GM12878 (cell line): ENCODE measurements at regions of chr14 and their contacts with region 1.

Region 1: DNA sequence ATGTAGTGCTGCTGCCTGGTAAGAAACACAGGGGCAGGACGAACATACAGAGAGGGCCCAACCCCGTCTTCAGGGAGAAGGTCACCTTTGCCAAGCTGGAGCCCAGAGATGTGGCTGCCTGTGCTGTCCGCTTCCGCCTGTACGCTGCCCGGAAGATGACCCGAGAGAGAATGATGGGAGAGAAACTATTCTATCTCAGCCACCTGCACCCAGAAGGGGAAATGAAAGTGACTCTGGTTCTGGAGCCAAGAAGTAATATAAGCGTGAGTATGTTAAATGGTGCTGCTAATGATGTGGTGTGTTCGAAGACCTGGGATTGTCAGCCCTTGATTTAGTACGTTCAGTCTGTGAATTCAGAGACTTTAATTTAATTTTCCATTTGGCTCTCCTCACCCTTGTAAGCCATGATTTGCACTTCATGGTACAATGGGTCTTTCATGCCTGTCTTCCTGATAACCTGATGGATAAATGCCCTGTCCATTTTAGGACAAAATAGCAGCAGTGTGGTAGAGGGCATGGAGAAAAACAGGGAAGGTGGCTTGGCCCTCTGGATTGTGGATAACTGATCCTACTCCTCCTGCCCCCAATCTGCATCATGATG is 318.9 kb downstream of the SNAPC1 start:
- DNase-seq: peak; percentile 75
- ATAC-seq: peak; percentile 95
- H3K4me3 ChIP-seq: peak overlapping the region; percentile 37
- H3K27ac ChIP-seq: peak overlapping the region; percentile 88
- H3K4me1 ChIP-seq: peaks cover 51% of the 10 kb centered on the region
- H3K27me3 ChIP-seq: no peaks in the 10 kb centered on the region
- CTCF ChIP-seq: no peak
- EP300 ChIP-seq: peak; percentile 80 to 94; a peak in 3 of 4 replicates
- POLR2A ChIP-seq: peak; percentile 61
- RAD21 ChIP-seq: no peak

Region 2: DNA sequence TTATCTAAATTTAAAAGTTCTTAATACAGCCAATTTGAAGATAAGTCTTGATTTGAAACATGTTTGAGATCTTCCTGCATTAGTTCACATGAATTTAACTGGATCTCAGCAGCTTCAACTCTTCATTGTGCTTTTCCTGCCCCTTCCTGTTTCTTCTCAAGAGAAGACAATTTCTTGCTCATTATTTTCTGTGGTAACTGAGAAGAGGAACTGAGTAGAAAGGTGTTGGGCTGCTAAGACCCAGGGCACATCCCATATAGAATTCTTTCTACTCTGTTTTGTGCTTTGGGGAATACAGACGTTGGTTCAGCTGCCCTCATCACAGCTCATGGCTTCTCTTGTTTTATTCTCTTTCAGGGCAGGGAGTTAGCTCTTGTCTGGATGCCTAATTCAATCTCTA is 208.7 kb before region 1 on chr14:
- CTCF ChIA-PET with region 1: no interaction called
- POLR2A ChIA-PET with region 1: no interaction called
- RAD21 ChIA-PET with region 1: interaction called, 5 read pairs
- SMC1A ChIA-PET with region 1: interaction called, 8 read pairs
- in situ Hi-C with region 1: no loop called
- intact Hi-C with region 1: loop called (anchors 5 kb)
- DNase-seq: peak; percentile 73
- ATAC-seq: peak; percentile 96
- H3K4me3 ChIP-seq: no peak overlapping the region
- H3K27ac ChIP-seq: no peak overlapping the region
- H3K4me1 ChIP-seq: peaks cover 18% of the 10 kb centered on the region; the same call in 1 of the 2 replicates
- H3K27me3 ChIP-seq: no peaks in the 10 kb centered on the region
- CTCF ChIP-seq: no peak
- EP300 ChIP-seq: peak in 1 of 2 experiments; percentile 92; a peak in 2 of 4 replicates
- POLR2A ChIP-seq: no peak
- RAD21 ChIP-seq: no peak

Region 3: DNA sequence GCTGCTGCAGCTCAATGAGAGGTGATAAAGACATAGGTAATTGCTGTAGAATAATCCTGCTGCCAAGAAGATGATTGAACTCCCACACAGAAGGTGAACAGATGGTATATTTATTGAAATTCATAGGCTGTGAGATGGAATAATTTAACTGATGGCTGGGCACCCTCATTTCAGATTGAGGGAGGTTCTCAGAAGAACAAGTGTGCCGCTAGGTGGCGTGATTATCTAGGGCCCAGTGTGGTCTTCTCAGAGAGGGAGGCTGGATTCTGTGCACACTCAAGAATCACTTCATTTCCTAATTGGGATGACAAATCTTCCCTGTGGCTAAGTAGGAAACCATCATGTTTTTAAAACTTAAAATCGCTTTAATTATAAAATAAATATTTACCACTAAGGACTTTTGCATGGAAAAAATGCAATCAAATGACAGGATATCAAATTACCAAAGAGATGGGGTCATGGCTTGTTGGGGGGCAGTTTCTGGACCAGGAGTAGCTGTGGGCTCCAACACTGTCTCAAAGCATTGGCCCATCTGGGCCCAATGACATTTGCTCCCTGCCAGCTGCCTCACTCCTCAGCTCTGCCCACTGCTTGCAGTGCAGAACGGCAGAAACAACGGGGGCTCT is 186.5 kb before region 1 on chr14:
- CTCF ChIA-PET with region 1: interaction called, 6 read pairs
- POLR2A ChIA-PET with region 1: no interaction called
- RAD21 ChIA-PET with region 1: interaction called, 6 read pairs
- SMC1A ChIA-PET with region 1: interaction called, 14 read pairs
- in situ Hi-C with region 1: no loop called
- intact Hi-C with region 1: no loop called
- DNase-seq: no peak
- ATAC-seq: peak; percentile 69
- H3K4me3 ChIP-seq: no peak overlapping the region
- H3K27ac ChIP-seq: no peak overlapping the region
- H3K4me1 ChIP-seq: peaks cover 11% of the 10 kb centered on the region
- H3K27me3 ChIP-seq: no peaks in the 10 kb centered on the region
- CTCF ChIP-seq: peak; percentile 69 to 77 (median 69)
- EP300 ChIP-seq: no peak
- POLR2A ChIP-seq: no peak
- RAD21 ChIP-seq: peak; percentile 80

Region 4: DNA sequence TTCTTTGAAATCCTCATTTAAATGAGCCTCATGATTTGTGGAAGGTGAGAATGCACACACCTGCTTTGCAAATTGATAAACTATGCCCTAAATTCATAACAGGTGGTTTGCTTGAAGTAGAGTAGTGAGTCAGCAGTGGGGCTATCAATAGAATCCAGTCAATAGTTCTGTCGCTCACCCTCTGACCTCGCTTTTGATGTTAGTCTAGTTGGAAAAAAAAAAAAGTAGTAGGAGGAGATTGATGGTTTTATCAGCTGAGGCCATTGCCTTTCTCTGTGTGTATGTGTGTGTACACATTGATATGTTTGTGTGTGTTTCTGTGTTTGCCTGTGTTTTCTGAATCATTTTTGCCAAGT is 51.6 kb before region 1 on chr14:
- CTCF ChIA-PET with region 1: interaction called, 6 read pairs
- POLR2A ChIA-PET with region 1: interaction called, 3 read pairs
- RAD21 ChIA-PET with region 1: interaction called, 23 read pairs
- SMC1A ChIA-PET with region 1: interaction called, 26 read pairs
- in situ Hi-C with region 1: no loop called
- intact Hi-C with region 1: no loop called
- DNase-seq: peak; percentile 16
- ATAC-seq: peak; percentile 72
- H3K4me3 ChIP-seq: no peak overlapping the region
- H3K27ac ChIP-seq: no peak overlapping the region
- H3K4me1 ChIP-seq: peaks cover 21% of the 10 kb centered on the region
- H3K27me3 ChIP-seq: no peaks in the 10 kb centered on the region
- CTCF ChIP-seq: no peak
- EP300 ChIP-seq: no peak
- POLR2A ChIP-seq: no peak
- RAD21 ChIP-seq: no peak

Region 5: GRCh38 chr14:62097072-62097471 is 16.0 kb after region 1 on chr14:
- CTCF ChIA-PET with region 1: interaction called, 6 read pairs
- POLR2A ChIA-PET with region 1: interaction called, 5 read pairs
- RAD21 ChIA-PET with region 1: interaction called, 33 read pairs
- SMC1A ChIA-PET with region 1: interaction called, 87 read pairs
- in situ Hi-C with region 1: no loop called
- intact Hi-C with region 1: no loop called
- DNase-seq: no peak
- ATAC-seq: peak; percentile 64
- H3K4me3 ChIP-seq: no peak overlapping the region
- H3K27ac ChIP-seq: no peak overlapping the region
- H3K4me1 ChIP-seq: no peaks in the 10 kb centered on the region
- H3K27me3 ChIP-seq: no peaks in the 10 kb centered on the region
- CTCF ChIP-seq: no peak
- EP300 ChIP-seq: no peak
- POLR2A ChIP-seq: no peak
- RAD21 ChIP-seq: no peak

Region 6: GRCh38 chr14:62117010-62117750 is 36.1 kb after region 1 on chr14:
- CTCF ChIA-PET with region 1: interaction called, 3 read pairs
- POLR2A ChIA-PET with region 1: no interaction called
- RAD21 ChIA-PET with region 1: interaction called, 5 read pairs
- SMC1A ChIA-PET with region 1: interaction called, 15 read pairs
- in situ Hi-C with region 1: no loop called
- intact Hi-C with region 1: no loop called
- DNase-seq: no peak
- ATAC-seq: peak; percentile 95
- H3K4me3 ChIP-seq: peak overlapping the region; percentile 41; the same call in 1 of the 2 replicates
- H3K27ac ChIP-seq: no peak overlapping the region
- H3K4me1 ChIP-seq: no peaks in the 10 kb centered on the region
- H3K27me3 ChIP-seq: peaks cover 5 to 9% of the 10 kb centered on the region in 2 experiments
- CTCF ChIP-seq: peak in 2 of 3 experiments; percentile 42 to 56; a peak in 5 of 6 replicates
- EP300 ChIP-seq: no peak
- POLR2A ChIP-seq: no peak
- RAD21 ChIP-seq: no peak